K562 (cell line): ENCODE measurements at regions of chr2 and their contacts with region 1.

Region 1: DNA sequence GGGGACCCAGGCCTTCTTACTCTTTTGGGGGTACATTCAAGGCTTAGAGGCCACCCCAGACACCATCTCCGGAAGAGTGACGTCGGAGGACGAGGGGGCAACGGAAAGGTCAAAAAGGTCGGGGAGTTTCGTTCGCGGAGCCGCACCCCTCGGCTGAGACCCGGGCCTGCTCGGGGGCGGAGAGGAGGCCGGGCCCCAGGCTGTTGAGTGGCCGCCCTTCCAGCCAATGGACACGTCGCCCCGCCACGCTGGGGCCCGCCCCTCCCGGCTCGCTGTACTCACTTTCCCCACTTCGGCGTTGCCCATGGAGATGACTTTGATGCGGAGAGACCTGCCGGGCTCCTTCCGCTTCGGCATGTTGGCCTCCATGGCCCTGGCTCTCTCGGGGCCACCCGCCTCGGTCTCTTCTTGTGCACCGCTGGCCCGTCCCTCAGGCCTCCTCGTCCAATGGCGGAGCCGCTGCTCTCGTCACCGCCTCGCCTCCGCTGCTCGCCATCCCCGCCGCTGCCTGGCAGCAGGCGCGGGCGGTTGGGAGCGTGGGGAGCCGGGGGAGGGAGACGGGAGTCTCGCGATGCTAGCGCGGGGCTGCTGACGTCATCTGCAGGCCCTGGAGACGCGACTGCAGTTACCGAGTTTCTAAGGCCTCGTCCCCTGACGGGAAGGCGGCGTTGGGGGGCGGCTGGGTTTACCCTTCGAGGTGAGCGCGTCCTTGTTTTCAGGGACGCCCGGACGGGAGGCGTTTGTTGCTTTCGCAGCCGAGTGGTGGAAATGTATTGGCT is at the start of gene DNAJC27:
- DNase-seq: peak; percentile 98 to 99 (median 98)
- ATAC-seq: peak; percentile 97
- H3K4me3 ChIP-seq: peak within 1 kb of the TSS; percentile 81
- H3K27ac ChIP-seq: peak within 1 kb of the TSS; percentile 94
- H3K4me1 ChIP-seq: peaks cover 6 to 25% of the 10 kb centered on the region in 2 experiments
- H3K27me3 ChIP-seq: no peaks in the 10 kb centered on the region
- CTCF ChIP-seq: peak in 1 of 3 experiments; percentile 22; a peak in 2 of 6 replicates
- EP300 ChIP-seq: peak; percentile 46
- POLR2A ChIP-seq: peak; percentile 96
- RAD21 ChIP-seq: no peak
- polyA plus RNA-seq, gene DNAJC27: 0.53 to 1.1 TPM

Region 2: GRCh38 chr2:24682304-24682703 is 289.4 kb before region 1 on chr2:
- CTCF ChIA-PET with region 1: no interaction called
- POLR2A ChIA-PET with region 1: no interaction called
- in situ Hi-C with region 1: no loop called
- intact Hi-C with region 1: no loop called
- DNase-seq: peak in 1 of 4 experiments; percentile 5
- ATAC-seq: peak; percentile 42; the same call in 1 of the 3 replicates
- H3K4me3 ChIP-seq: no peak overlapping the region
- H3K27ac ChIP-seq: no peak overlapping the region
- H3K4me1 ChIP-seq: no peaks in the 10 kb centered on the region; a peak in 1 of 5 replicates
- H3K27me3 ChIP-seq: no peaks in the 10 kb centered on the region
- CTCF ChIP-seq: no peak
- EP300 ChIP-seq: no peak
- POLR2A ChIP-seq: no peak
- RAD21 ChIP-seq: no peak

Region 3: DNA sequence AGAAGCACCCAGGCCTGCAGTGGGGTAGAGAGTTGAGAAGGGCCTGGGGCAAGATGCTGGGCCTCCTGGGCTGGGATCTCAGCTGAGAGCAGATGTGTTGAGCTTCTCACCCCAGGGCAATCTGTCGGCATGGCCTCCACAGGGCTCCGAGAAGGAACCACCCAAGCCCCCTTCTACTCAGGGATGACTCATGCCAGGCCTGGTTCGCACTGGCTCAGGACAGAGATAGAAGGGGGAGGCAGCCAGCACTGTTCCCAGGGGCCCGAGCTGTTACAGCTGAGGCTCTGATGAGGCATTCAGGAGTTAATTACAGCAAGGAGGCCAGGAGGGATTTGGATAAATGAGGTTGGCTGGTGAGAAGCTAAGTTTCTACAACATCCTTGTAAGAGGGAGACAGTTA is 116.0 kb before region 1 on chr2:
- CTCF ChIA-PET with region 1: no interaction called
- POLR2A ChIA-PET with region 1: no interaction called
- in situ Hi-C with region 1: no loop called
- intact Hi-C with region 1: loop called (anchors 10 kb)
- DNase-seq: no peak
- ATAC-seq: peak; percentile 56
- H3K4me3 ChIP-seq: no peak overlapping the region
- H3K27ac ChIP-seq: no peak overlapping the region
- H3K4me1 ChIP-seq: peaks cover 7% of the 10 kb centered on the region in 2 experiments; a peak in 3 of 5 replicates
- H3K27me3 ChIP-seq: no peaks in the 10 kb centered on the region
- CTCF ChIP-seq: no peak
- EP300 ChIP-seq: no peak
- POLR2A ChIP-seq: no peak
- RAD21 ChIP-seq: no peak

Region 4: GRCh38 chr2:24920098-24920808 is 51.5 kb before region 1 on chr2 and contains the start of gene ADCY3:
- CTCF ChIA-PET with region 1: no interaction called
- POLR2A ChIA-PET with region 1: no interaction called
- in situ Hi-C with region 1: no loop called
- intact Hi-C with region 1: loop called (anchors 5 kb)
- DNase-seq: peak; percentile 68 to 91 (median 88)
- ATAC-seq: peak; percentile 69
- H3K4me3 ChIP-seq: peak within 1 kb of the TSS; percentile 68
- H3K27ac ChIP-seq: peak within 1 kb of the TSS; percentile 66
- H3K4me1 ChIP-seq: peaks cover 34 to 50% of the 10 kb centered on the region in 2 experiments; a peak in 4 of 5 replicates
- H3K27me3 ChIP-seq: no peaks in the 10 kb centered on the region
- CTCF ChIP-seq: no peak
- EP300 ChIP-seq: no peak
- POLR2A ChIP-seq: no peak
- RAD21 ChIP-seq: no peak
- polyA plus RNA-seq, gene ADCY3: 1.5 to 2.6 TPM

Region 5: GRCh38 chr2:25131567-25132298 is 160.0 kb after region 1 on chr2:
- CTCF ChIA-PET with region 1: interaction called, 33 read pairs
- POLR2A ChIA-PET with region 1: interaction called, 7 read pairs
- in situ Hi-C with region 1: loop called (anchors 5 kb)
- intact Hi-C with region 1: loop called (anchors 1 kb)
- DNase-seq: peak in 2 of 4 experiments; percentile 52 to 57
- ATAC-seq: peak; percentile 9; the same call in 1 of the 3 replicates
- H3K4me3 ChIP-seq: no peak overlapping the region
- H3K27ac ChIP-seq: no peak overlapping the region
- H3K4me1 ChIP-seq: peaks cover 2 to 12% of the 10 kb centered on the region in 2 experiments; a peak in 4 of 5 replicates
- H3K27me3 ChIP-seq: peaks cover 48 to 78% of the 10 kb centered on the region in 2 experiments; a peak in 4 of 5 replicates
- CTCF ChIP-seq: no peak
- EP300 ChIP-seq: no peak
- POLR2A ChIP-seq: no peak
- RAD21 ChIP-seq: no peak

Region 6: DNA sequence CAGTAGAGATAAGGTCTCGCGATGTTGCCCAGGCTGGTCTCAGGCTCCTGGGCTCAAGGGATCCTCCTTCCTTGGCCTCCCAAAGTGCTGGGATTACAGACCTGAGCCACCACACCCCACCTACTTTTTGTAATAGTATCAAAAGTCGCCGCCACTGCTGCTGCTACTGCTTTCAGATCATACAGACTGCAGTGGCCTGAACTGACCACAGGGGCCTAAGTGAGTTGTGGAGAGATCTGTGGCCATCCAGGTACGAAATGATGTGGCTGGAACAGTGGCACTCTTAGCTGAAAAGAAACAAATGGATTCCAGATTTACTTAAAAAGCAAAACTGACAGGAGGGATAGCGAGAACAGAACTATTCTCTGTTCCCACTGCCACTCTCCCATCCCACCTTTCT is 229.5 kb after region 1 on chr2:
- CTCF ChIA-PET with region 1: interaction called, 6 read pairs
- POLR2A ChIA-PET with region 1: no interaction called
- in situ Hi-C with region 1: no loop called
- intact Hi-C with region 1: loop called (anchors 1 kb)
- DNase-seq: peak; percentile 43 to 53 (median 50)
- ATAC-seq: peak; percentile 93
- H3K4me3 ChIP-seq: no peak overlapping the region
- H3K27ac ChIP-seq: no peak overlapping the region
- H3K4me1 ChIP-seq: peaks cover 0 to 11% of the 10 kb centered on the region in 2 experiments; a peak in 2 of 5 replicates
- H3K27me3 ChIP-seq: 0 out of 5 replicates have a peak, but pooled peaks cover 0 to 2% of the 10 kb centered on the region in 2 experiments
- CTCF ChIP-seq: peak; percentile 42 to 54 (median 48); a peak in 3 of 6 replicates
- EP300 ChIP-seq: no peak
- POLR2A ChIP-seq: no peak
- RAD21 ChIP-seq: peak in 1 of 2 experiments; percentile 33; a peak in 2 of 4 replicates